Activated CD8-positive, alpha-beta T cell treated with anti-CD3 and anti-CD28 coated beads, Interleukin-2, amount 10 ng/mL, durations not matched to agents 7 days and 5 days (primary cell): ENCODE measurements at regions of chr6 and their contacts with region 1.

Region 1: GRCh38 chr6:85537055-85537494 is 56.6 kb downstream of the SNX14 start:
- DNase-seq: no peak
- ATAC-seq: no peak
- H3K4me3 Mint-ChIP-seq: no peak overlapping the region
- H3K27ac Mint-ChIP-seq: peak overlapping the region; percentile 24
- H3K4me1 Mint-ChIP-seq: no peaks in the 10 kb centered on the region
- H3K27me3 Mint-ChIP-seq: no peaks in the 10 kb centered on the region

Region 2: GRCh38 chr6:85468261-85468660 is 68.8 kb before region 1 on chr6:
- CTCF ChIA-PET with region 1: interaction called, 10 read pairs
- POLR2A ChIA-PET with region 1: no interaction called
- DNase-seq: no peak
- ATAC-seq: no peak
- H3K4me3 Mint-ChIP-seq: no peak overlapping the region
- H3K27ac Mint-ChIP-seq: peak overlapping the region; percentile 5
- H3K4me1 Mint-ChIP-seq: peaks cover 40% of the 10 kb centered on the region
- H3K27me3 Mint-ChIP-seq: no peaks in the 10 kb centered on the region